Activated naive CD4-positive, alpha-beta T cell treated with anti-CD3 and anti-CD28 coated beads for 36 hours (primary cell): ENCODE measurements at regions of chr3 and their contacts with region 1.

Region 1: GRCh38 chr3:129439817-129440617 is at the starts of genes IFT122 and MBD4:
- DNase-seq: peak; percentile 99
- H3K4me3 Mint-ChIP-seq: peak within 1 kb of the TSS; percentile 87
- H3K27ac Mint-ChIP-seq: peak within 1 kb of the TSS; percentile 89
- H3K4me1 Mint-ChIP-seq: peaks cover 53% of the 10 kb centered on the region
- H3K27me3 Mint-ChIP-seq: no peaks in the 10 kb centered on the region
- total RNA-seq, gene IFT122: 27.8 to 32.4 TPM
- total RNA-seq, gene MBD4: 50.9 to 51.0 TPM

Region 2: GRCh38 chr3:128051837-128052594 is 1388.0 kb before region 1 on chr3 and contains the start of gene SEC61A1:
- CTCF ChIA-PET with region 1: no interaction called
- intact Hi-C with region 1: loop called (anchors 10 kb)
- DNase-seq: peak; percentile 95
- H3K4me3 Mint-ChIP-seq: peak within 1 kb of the TSS; percentile 91
- H3K27ac Mint-ChIP-seq: peak within 1 kb of the TSS; percentile 95
- H3K4me1 Mint-ChIP-seq: peaks cover 40% of the 10 kb centered on the region
- H3K27me3 Mint-ChIP-seq: peaks cover under 1% of the 10 kb centered on the region
- total RNA-seq, gene SEC61A1: 115 to 119 TPM

Region 3: DNA sequence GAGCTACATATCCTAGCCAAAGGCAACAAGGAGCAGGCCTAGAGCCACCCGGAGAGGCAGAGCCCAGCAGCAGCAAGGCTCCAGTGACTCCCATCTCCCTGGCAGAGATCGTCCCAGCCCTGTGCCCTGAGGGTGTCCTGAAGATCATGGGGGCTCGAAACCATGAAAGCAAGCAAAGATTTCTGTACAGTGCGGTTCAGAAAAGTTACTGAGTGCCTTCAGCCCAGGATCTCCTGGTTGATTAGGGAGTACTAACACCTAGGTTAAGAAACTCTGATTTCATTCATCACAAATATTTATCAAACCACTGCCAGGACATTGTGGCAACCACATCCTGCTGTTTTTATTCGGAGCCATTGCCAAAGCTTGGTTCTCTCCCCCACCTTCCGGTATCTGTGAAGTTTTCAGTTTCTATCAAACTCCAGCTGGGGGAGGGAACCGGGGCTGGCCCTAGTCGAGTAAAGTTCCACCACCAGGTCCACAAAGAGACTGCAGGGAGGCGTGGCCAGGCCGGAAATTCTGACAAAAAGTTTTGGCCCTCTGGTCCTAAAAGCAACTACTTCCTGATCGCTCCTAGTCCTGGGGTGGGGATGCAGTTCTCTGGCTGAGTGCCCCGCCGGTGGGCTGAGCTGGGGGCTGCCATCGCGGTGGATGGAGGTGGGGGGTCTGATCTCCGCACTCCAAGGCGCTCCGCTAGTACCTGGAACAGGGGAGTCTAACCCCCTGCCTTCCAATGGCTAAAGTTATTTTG is 319.6 kb before region 1 on chr3:
- CTCF ChIA-PET with region 1: no interaction called
- intact Hi-C with region 1: loop called (anchors 5 kb)
- DNase-seq: peak; percentile 98
- H3K4me3 Mint-ChIP-seq: peak overlapping the region; percentile 94
- H3K27ac Mint-ChIP-seq: peak overlapping the region; percentile 99
- H3K4me1 Mint-ChIP-seq: peaks cover 46% of the 10 kb centered on the region
- H3K27me3 Mint-ChIP-seq: no peaks in the 10 kb centered on the region

Region 4: GRCh38 chr3:129316131-129317013 is 123.6 kb before region 1 on chr3:
- CTCF ChIA-PET with region 1: interaction called, 4 read pairs
- intact Hi-C with region 1: loop called (anchors 1 kb)
- DNase-seq: peak; percentile 87
- H3K4me3 Mint-ChIP-seq: peak overlapping the region; percentile 96
- H3K27ac Mint-ChIP-seq: peak overlapping the region; percentile 85
- H3K4me1 Mint-ChIP-seq: peaks cover 14% of the 10 kb centered on the region
- H3K27me3 Mint-ChIP-seq: no peaks in the 10 kb centered on the region

Region 5: DNA sequence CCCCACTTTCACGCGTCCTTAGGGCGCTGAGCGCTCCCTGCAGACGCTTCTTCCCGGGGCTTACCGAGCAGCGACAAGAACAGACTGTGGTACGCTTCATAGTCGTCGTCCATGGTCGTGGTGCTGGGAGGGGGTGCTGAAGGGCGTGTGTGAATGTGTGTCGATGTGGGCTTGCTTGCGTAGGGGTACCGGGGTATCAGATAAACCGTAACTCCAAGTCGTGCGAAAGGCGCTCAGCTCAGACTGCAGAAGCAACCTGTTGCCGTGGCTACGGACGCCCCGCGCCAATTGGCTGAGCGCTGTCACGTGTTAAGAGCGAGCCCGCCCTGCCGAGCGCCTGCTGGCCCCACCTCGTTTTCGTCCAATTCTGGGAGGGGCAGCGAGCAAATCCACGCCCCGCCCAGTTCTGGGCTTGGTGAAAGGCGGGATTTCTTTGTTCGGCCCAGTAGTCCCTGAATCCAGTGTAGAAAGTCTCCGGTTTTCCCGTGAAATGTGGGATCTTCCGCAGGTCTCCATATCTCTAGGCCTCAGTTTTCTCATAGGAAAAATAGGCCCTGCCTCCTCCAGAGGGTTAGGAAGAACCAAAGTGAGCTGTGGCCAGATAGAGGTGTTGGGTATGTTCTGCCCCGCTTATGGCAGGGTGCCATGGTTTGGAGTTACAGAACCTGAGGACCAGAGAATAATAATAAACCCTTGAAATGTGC is 11.5 kb before region 1 on chr3 and contains the start of gene EFCAB12:
- CTCF ChIA-PET with region 1: interaction called, 4 read pairs
- intact Hi-C with region 1: loop called (anchors 1 kb)
- DNase-seq: peak; percentile 94
- H3K4me3 Mint-ChIP-seq: peak within 1 kb of the TSS; percentile 65
- H3K27ac Mint-ChIP-seq: peak within 1 kb of the TSS; percentile 71
- H3K4me1 Mint-ChIP-seq: peaks cover 45% of the 10 kb centered on the region
- H3K27me3 Mint-ChIP-seq: no peaks in the 10 kb centered on the region
- total RNA-seq, gene EFCAB12: 0.37 to 0.81 TPM

Region 6: GRCh38 chr3:129627429-129628168 is 187.6 kb after region 1 on chr3:
- CTCF ChIA-PET with region 1: no interaction called
- intact Hi-C with region 1: loop called (anchors 2 kb)
- DNase-seq: peak; percentile 83
- H3K4me3 Mint-ChIP-seq: peak overlapping the region; percentile 92
- H3K27ac Mint-ChIP-seq: peak overlapping the region; percentile 65
- H3K4me1 Mint-ChIP-seq: peaks cover 10% of the 10 kb centered on the region
- H3K27me3 Mint-ChIP-seq: no peaks in the 10 kb centered on the region

Region 7: GRCh38 chr3:129690406-129690805 is 250.4 kb after region 1 on chr3:
- CTCF ChIA-PET with region 1: no interaction called
- intact Hi-C with region 1: no loop called
- DNase-seq: peak; percentile 36
- H3K4me3 Mint-ChIP-seq: no peak overlapping the region
- H3K27ac Mint-ChIP-seq: no peak overlapping the region
- H3K4me1 Mint-ChIP-seq: peaks cover 7% of the 10 kb centered on the region
- H3K27me3 Mint-ChIP-seq: no peaks in the 10 kb centered on the region

Region 8: DNA sequence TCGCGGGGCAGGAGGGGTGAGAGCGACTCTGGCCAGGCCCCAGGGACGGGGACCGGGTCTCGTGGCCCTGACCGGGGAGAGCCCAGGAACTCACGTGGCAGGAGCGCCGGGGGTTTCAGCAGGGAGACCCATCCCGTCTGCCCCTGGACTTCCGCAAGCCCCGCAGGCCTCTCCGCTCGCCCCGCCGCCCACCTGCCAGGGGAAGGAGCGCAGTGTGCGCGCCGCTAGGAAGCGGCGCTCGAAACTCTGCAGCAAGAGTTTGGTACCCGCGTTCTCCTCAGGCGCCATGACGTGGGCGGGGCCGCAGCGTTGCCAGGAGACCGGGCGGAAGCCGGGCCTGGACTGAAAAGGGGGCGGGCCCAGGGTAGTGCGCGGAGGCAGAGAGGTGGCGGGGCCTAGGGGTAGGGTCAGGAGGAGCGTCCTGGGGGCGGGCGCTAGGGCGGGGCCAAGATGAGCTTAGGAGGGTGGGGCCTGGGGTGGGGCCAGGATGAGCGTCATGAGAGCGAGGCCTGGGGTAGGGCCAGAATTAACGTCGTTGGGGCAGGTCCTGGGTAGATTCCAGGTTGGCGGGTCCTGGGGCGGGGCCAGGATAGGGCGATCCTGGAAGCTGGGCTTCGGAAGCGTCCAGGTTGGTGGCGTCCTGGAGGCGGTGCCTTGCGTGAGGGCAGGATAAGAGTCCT is 671.3 kb after region 1 on chr3:
- CTCF ChIA-PET with region 1: no interaction called
- intact Hi-C with region 1: loop called (anchors 1 kb)
- DNase-seq: peak; percentile 99
- H3K4me3 Mint-ChIP-seq: peak overlapping the region; percentile 92
- H3K27ac Mint-ChIP-seq: peak overlapping the region; percentile 95
- H3K4me1 Mint-ChIP-seq: peaks cover 18% of the 10 kb centered on the region
- H3K27me3 Mint-ChIP-seq: no peaks in the 10 kb centered on the region